Ovary (tissue), 10 donors: ENCODE measurements at regions of chr18 and their contacts with region 1.

Region 1: DNA sequence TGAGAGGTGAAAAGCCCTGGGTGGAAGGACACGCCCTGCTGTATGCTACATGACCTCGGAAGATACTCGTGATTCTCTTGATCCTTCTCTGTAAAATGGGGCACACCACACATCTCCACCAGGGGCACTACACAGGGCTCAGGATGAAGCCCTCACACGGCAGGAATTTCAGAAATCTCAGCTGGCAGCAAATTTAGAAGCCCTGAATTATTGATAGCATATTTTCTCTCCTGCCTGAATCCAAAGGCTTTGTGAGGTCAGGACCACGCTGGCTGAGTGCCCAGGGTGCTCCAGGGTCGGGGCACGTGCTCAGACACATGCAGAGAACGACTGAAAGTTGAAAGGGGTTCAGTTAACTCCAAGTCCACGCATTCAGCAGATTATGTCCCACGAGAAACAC is 42.1 kb upstream of the GALR1 start:
- DNase-seq: peak; percentile 76 to 93 (median 85)
- H3K4me3 ChIP-seq: no peak overlapping the region
- H3K27ac ChIP-seq: peak overlapping the region in 1 of 2 donors; percentile 54
- H3K4me1 ChIP-seq: peaks cover 6% of the 10 kb centered on the region
- H3K27me3 ChIP-seq: no peaks in the 10 kb centered on the region
- CTCF ChIP-seq: peak in 2 of 3 donors; percentile 21 to 44
- EP300 ChIP-seq: no peak
- POLR2A ChIP-seq: no peak

Region 2: DNA sequence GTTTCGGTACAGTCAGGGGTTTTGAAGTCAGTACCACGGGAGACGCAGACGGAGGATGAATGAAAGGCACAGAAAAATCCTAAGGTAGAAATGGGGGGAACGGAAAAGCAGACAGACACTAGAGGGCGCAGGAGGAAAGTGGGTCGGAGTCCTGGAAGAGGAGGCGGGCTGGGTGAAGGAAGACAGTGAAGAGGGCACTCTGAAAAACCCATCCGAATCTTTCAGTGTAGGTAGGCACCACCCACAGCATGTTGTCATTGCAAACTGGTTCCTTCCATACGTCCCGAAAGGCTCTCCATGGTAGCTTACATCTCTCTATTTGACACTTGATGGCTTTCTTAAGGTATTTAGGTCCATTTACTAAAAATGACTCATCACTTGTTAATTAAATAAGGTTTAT is 403.7 kb before region 1 on chr18:
- intact Hi-C with region 1: loop called in 2 of 4 experiments (anchors 10 kb)
- DNase-seq: peak; percentile 53 to 73 (median 69)
- H3K4me3 ChIP-seq: no peak overlapping the region
- H3K27ac ChIP-seq: no peak overlapping the region
- H3K4me1 ChIP-seq: peaks cover 2% of the 10 kb centered on the region
- H3K27me3 ChIP-seq: no peaks in the 10 kb centered on the region
- CTCF ChIP-seq: peak; percentile 48 to 75 (median 51)
- EP300 ChIP-seq: no peak
- POLR2A ChIP-seq: no peak

Region 3: DNA sequence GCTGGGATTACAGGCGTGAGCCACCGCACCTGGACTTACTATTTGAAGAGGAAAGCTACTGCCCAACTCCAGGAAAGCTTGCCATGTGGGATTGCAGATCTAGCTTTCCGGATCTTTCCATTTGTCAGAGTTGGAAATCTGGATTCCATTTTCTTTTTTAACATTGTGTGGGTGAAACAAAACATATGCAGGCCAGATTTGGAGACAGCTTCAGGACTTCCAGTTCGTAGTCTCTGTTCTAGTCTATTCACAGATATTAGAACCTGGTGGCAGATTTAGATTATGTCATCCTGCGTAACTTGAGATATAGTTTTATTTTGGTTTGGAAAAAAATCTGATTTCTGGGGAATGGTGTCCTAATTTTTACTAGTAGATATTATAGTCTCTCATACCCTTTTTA is 314.7 kb before region 1 on chr18:
- intact Hi-C with region 1: no loop called
- DNase-seq: no peak
- H3K4me3 ChIP-seq: no peak overlapping the region
- H3K27ac ChIP-seq: no peak overlapping the region
- H3K4me1 ChIP-seq: no peaks in the 10 kb centered on the region
- H3K27me3 ChIP-seq: no peaks in the 10 kb centered on the region
- CTCF ChIP-seq: no peak
- EP300 ChIP-seq: no peak
- POLR2A ChIP-seq: no peak

Region 4: DNA sequence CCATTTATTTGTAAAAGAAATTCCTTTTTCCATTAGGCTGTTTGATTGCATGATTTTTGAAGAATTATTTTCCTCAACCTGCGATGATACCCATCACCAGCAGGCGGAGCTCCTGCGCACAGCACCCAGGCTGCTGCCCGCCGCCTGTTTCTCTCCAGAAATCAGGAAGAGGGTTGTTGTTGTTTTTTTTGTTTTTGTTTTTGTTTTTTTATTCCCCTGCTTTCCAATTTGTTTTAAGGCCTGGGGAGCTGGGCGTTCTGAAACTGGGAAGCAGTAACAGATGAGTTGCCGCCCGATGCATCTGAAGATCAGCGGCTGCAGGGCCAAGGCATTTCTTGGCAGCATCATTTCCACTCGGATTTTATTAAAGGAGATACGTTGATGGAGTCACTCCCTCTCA is 207.0 kb before region 1 on chr18:
- intact Hi-C with region 1: loop called (anchors 5 to 10 kb)
- DNase-seq: peak; percentile 34 to 74 (median 65)
- H3K4me3 ChIP-seq: no peak overlapping the region
- H3K27ac ChIP-seq: no peak overlapping the region
- H3K4me1 ChIP-seq: no peaks in the 10 kb centered on the region
- H3K27me3 ChIP-seq: no peaks in the 10 kb centered on the region
- CTCF ChIP-seq: peak; percentile 82 to 97 (median 88)
- EP300 ChIP-seq: no peak
- POLR2A ChIP-seq: no peak

Region 5: GRCh38 chr18:77061946-77062517 is 145.5 kb before region 1 on chr18:
- intact Hi-C with region 1: loop called in 2 of 4 experiments (anchors 5 to 10 kb)
- DNase-seq: peak in 1 of 5 donors; percentile 24
- H3K4me3 ChIP-seq: no peak overlapping the region
- H3K27ac ChIP-seq: peak overlapping the region in 1 of 2 donors; percentile 2
- H3K4me1 ChIP-seq: no peaks in the 10 kb centered on the region
- H3K27me3 ChIP-seq: no peaks in the 10 kb centered on the region
- CTCF ChIP-seq: no peak
- EP300 ChIP-seq: no peak
- POLR2A ChIP-seq: no peak

Region 6: GRCh38 chr18:77067291-77068061 is 140.1 kb before region 1 on chr18:
- intact Hi-C with region 1: loop called in 2 of 4 experiments (anchors 5 to 10 kb)
- DNase-seq: peak; percentile 62 to 77 (median 69)
- H3K4me3 ChIP-seq: no peak overlapping the region
- H3K27ac ChIP-seq: peak overlapping the region in 1 of 2 donors; percentile 72
- H3K4me1 ChIP-seq: peaks cover 17% of the 10 kb centered on the region
- H3K27me3 ChIP-seq: no peaks in the 10 kb centered on the region
- CTCF ChIP-seq: peak in 1 of 3 donors; percentile 14
- EP300 ChIP-seq: no peak
- POLR2A ChIP-seq: no peak

Region 7: GRCh38 chr18:77132371-77133050 is 75.0 kb before region 1 on chr18 and contains the start of gene MBP:
- intact Hi-C with region 1: loop called in 1 of 4 experiments (anchors 5 kb)
- DNase-seq: peak; percentile 67 to 77 (median 71)
- H3K4me3 ChIP-seq: peak within 1 kb of the TSS; percentile 85
- H3K27ac ChIP-seq: peak within 1 kb of the TSS; percentile 94 to 96
- H3K4me1 ChIP-seq: peaks cover 2% of the 10 kb centered on the region
- H3K27me3 ChIP-seq: no peaks in the 10 kb centered on the region
- CTCF ChIP-seq: no peak
- EP300 ChIP-seq: no peak
- POLR2A ChIP-seq: peak; percentile 41
- total RNA-seq, gene MBP: 19.9 to 38.2 (median 24.2) TPM